ENCODE measurements at regions of chr1 and their contacts with region 1.

Region 1: GRCh38 chr1:244451951-244452795 is 464 bp upstream of the ADSS2 start:
- DNase-seq: peak; percentile 99
- H3K4me3 Mint-ChIP-seq: peak overlapping the region; percentile 97
- H3K27ac Mint-ChIP-seq: peak overlapping the region; percentile 86
- H3K4me1 Mint-ChIP-seq: peaks cover 37% of the 10 kb centered on the region
- H3K27me3 Mint-ChIP-seq: no peaks in the 10 kb centered on the region

Region 2: GRCh38 chr1:243255791-243256512 is 1196.2 kb before region 1 on chr1 and contains the start of gene SDCCAG8:
- CTCF ChIA-PET with region 1: no interaction called
- intact Hi-C with region 1: loop called (anchors 1 kb)
- DNase-seq: peak; percentile 97
- H3K4me3 Mint-ChIP-seq: peak within 1 kb of the TSS; percentile 99
- H3K27ac Mint-ChIP-seq: peak within 1 kb of the TSS; percentile 100
- H3K4me1 Mint-ChIP-seq: peaks cover 36% of the 10 kb centered on the region
- H3K27me3 Mint-ChIP-seq: no peaks in the 10 kb centered on the region
- total RNA-seq, gene SDCCAG8: 24.5 to 29.9 TPM

Region 3: GRCh38 chr1:244319283-244320132 is 132.7 kb before region 1 on chr1:
- CTCF ChIA-PET with region 1: interaction called, 3 read pairs
- intact Hi-C with region 1: loop called (anchors 1 kb)
- DNase-seq: peak; percentile 70
- H3K4me3 Mint-ChIP-seq: no peak overlapping the region
- H3K27ac Mint-ChIP-seq: peak overlapping the region; percentile 14
- H3K4me1 Mint-ChIP-seq: peaks cover 13% of the 10 kb centered on the region
- H3K27me3 Mint-ChIP-seq: no peaks in the 10 kb centered on the region

Region 4: GRCh38 chr1:244435562-244436205 is 16.5 kb before region 1 on chr1:
- CTCF ChIA-PET with region 1: interaction called, 3 read pairs
- intact Hi-C with region 1: loop called (anchors 1 kb)
- DNase-seq: peak; percentile 31
- H3K4me3 Mint-ChIP-seq: peak overlapping the region; percentile 11
- H3K27ac Mint-ChIP-seq: peak overlapping the region; percentile 87
- H3K4me1 Mint-ChIP-seq: peaks cover 47% of the 10 kb centered on the region
- H3K27me3 Mint-ChIP-seq: no peaks in the 10 kb centered on the region

Region 5: GRCh38 chr1:244730153-244730933 is 278.2 kb after region 1 on chr1:
- CTCF ChIA-PET with region 1: no interaction called
- intact Hi-C with region 1: loop called (anchors 5 kb)
- DNase-seq: peak; percentile 36
- H3K4me3 Mint-ChIP-seq: peak overlapping the region; percentile 78
- H3K27ac Mint-ChIP-seq: no peak overlapping the region
- H3K4me1 Mint-ChIP-seq: peaks cover 9% of the 10 kb centered on the region
- H3K27me3 Mint-ChIP-seq: peaks cover 22% of the 10 kb centered on the region

Region 6: GRCh38 chr1:244864253-244865027 is 412.3 kb after region 1 on chr1 and contains the start of gene HNRNPU:
- CTCF ChIA-PET with region 1: no interaction called
- intact Hi-C with region 1: loop called (anchors 1 kb)
- DNase-seq: peak; percentile 95
- H3K4me3 Mint-ChIP-seq: peak within 1 kb of the TSS; percentile 90
- H3K27ac Mint-ChIP-seq: peak within 1 kb of the TSS; percentile 99
- H3K4me1 Mint-ChIP-seq: peaks cover 31% of the 10 kb centered on the region
- H3K27me3 Mint-ChIP-seq: no peaks in the 10 kb centered on the region
- total RNA-seq, gene HNRNPU: 331 to 338 TPM